ENCODE measurements at regions of chr19 and their contacts with region 1.

Region 1: GRCh38 chr19:36054119-36054732 is at the start of gene THAP8:
- DNase-seq: peak; percentile 99 to 100 (median 100)
- H3K4me3 ChIP-seq: peak within 1 kb of the TSS; percentile 79 to 93
- H3K4me3 Mint-ChIP-seq: peak within 1 kb of the TSS; percentile 96 to 100 (median 99)
- H3K27ac ChIP-seq: peak within 1 kb of the TSS; percentile 78
- H3K27ac Mint-ChIP-seq: peak within 1 kb of the TSS; percentile 98 to 99 (median 98)
- H3K4me1 ChIP-seq: peaks cover 11% of the 10 kb centered on the region
- H3K4me1 Mint-ChIP-seq: peaks cover 16 to 41% (median 21%) of the 10 kb centered on the region in 4 donors
- H3K27me3 ChIP-seq: no peaks in the 10 kb centered on the region
- H3K27me3 Mint-ChIP-seq: no peaks in the 10 kb centered on the region
- total RNA-seq, gene THAP8: 5.1 to 7.0 TPM

Region 2: DNA sequence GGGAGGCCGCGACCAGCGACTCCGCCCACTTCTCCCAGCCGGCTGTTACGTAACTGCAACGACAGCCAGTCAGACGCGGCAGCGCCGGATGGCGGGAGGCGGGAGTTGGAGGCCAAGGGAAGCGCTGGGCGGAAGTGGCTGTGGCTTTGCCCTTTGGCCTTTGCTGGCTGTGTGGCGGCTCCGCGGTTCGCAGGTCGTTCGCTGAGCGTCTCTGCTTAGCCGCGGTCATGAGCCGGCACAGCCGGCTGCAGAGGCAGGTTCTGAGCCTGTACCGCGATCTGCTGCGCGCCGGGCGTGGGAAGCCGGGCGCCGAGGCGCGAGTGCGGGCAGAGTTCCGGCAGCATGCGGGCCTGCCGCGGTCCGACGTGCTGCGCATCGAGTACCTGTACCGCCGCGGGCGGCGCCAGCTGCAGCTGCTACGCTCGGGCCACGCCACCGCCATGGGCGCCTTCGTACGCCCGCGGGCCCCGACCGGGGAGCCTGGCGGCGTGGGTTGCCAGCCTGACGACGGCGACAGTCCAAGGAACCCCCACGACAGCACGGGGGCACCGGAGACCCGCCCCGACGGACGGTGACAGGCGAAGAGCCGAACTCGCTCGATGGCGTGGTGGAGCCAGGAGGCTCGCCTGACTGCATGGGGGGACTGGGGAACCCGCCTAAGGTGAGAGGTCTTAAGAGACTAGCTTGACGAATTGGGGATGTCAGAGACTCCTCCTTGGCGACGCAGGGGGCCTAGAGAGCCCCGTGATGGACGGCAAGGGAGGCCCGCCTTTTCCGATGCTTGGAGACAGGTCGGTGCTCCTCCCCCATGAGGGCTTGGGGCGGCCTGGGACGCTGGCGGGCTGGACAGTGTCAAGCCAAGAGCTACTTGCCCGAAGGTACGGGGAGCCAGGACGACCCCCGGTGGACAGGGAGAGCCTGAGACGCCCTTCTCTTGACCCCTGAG is 58.9 kb before region 1 on chr19 and contains the start of gene SDHAF1:
- CTCF ChIA-PET with region 1: no interaction called
- POLR2A ChIA-PET with region 1: interaction called, 15 read pairs
- intact Hi-C with region 1: loop called (anchors 1 kb)
- DNase-seq: peak; percentile 87 to 92 (median 87)
- H3K4me3 ChIP-seq: peak within 1 kb of the TSS; percentile 69 to 82
- H3K4me3 Mint-ChIP-seq: peak within 1 kb of the TSS; percentile 91 to 96 (median 94)
- H3K27ac ChIP-seq: peak within 1 kb of the TSS; percentile 71
- H3K27ac Mint-ChIP-seq: peak within 1 kb of the TSS; percentile 92 to 97 (median 97)
- H3K4me1 ChIP-seq: peaks cover 26% of the 10 kb centered on the region
- H3K4me1 Mint-ChIP-seq: peaks cover 20 to 48% (median 37%) of the 10 kb centered on the region in 4 donors
- H3K27me3 ChIP-seq: no peaks in the 10 kb centered on the region
- H3K27me3 Mint-ChIP-seq: no peaks in the 10 kb centered on the region
- total RNA-seq, gene SDHAF1: 25.7 to 25.8 TPM

Region 3: GRCh38 chr19:36014029-36014924 is 39.9 kb before region 1 on chr19 and contains the start of gene ALKBH6:
- CTCF ChIA-PET with region 1: interaction called, 6 read pairs
- POLR2A ChIA-PET with region 1: interaction called, 17 read pairs
- intact Hi-C with region 1: loop called (anchors 1 kb)
- DNase-seq: peak; percentile 97 to 99 (median 98)
- H3K4me3 ChIP-seq: peak within 1 kb of the TSS; percentile 92
- H3K4me3 Mint-ChIP-seq: peak within 1 kb of the TSS; percentile 94 to 99 (median 94)
- H3K27ac ChIP-seq: peak within 1 kb of the TSS; percentile 74
- H3K27ac Mint-ChIP-seq: peak within 1 kb of the TSS; percentile 85 to 99 (median 98)
- H3K4me1 ChIP-seq: peaks cover 30% of the 10 kb centered on the region
- H3K4me1 Mint-ChIP-seq: peaks cover 25 to 50% (median 33%) of the 10 kb centered on the region in 4 donors
- H3K27me3 ChIP-seq: no peaks in the 10 kb centered on the region
- H3K27me3 Mint-ChIP-seq: no peaks in the 10 kb centered on the region
- total RNA-seq, gene ALKBH6: 50.9 to 51.0 TPM

Region 4: DNA sequence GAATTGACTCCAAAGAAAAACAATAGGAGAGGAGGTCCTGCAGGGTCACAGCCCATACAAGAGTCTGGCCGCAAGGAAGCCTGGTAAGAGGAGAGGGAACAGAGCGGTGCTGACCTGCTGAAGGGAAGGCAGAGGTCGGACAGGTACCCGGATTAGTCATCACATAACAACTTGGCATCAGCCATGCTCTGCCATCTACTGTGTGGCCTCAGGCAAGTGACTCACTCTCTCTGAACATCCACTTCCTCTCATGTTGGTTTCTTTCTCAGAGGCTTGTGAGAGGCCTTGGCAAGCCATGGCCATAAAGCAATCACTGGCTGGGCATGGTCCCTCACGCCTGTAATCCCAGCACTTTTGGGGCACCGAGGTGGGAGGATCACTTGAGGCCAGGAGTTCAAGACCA is 78.3 kb after region 1 on chr19:
- CTCF ChIA-PET with region 1: interaction called, 6 read pairs
- POLR2A ChIA-PET with region 1: interaction called, 5 read pairs
- intact Hi-C with region 1: loop called (anchors 1 kb)
- DNase-seq: peak in 2 of 5 donors; percentile 14 to 54
- H3K4me3 ChIP-seq: no peak overlapping the region
- H3K4me3 Mint-ChIP-seq: peak overlapping the region in 4 of 8 donors; percentile 40 to 59 (median 54)
- H3K27ac ChIP-seq: no peak overlapping the region
- H3K27ac Mint-ChIP-seq: peak overlapping the region; percentile 29 to 86 (median 78)
- H3K4me1 ChIP-seq: peaks cover 32% of the 10 kb centered on the region
- H3K4me1 Mint-ChIP-seq: peaks cover 15 to 50% (median 29%) of the 10 kb centered on the region in 4 donors
- H3K27me3 ChIP-seq: no peaks in the 10 kb centered on the region
- H3K27me3 Mint-ChIP-seq: no peaks in the 10 kb centered on the region

Region 5: GRCh38 chr19:36139473-36140303 is 85.5 kb after region 1 on chr19 and contains the start of gene CAPNS1:
- CTCF ChIA-PET with region 1: no interaction called
- POLR2A ChIA-PET with region 1: interaction called, 8 read pairs
- intact Hi-C with region 1: loop called (anchors 1 kb)
- DNase-seq: peak; percentile 87 to 90 (median 88)
- H3K4me3 ChIP-seq: peak within 1 kb of the TSS; percentile 74 to 84
- H3K4me3 Mint-ChIP-seq: peak within 1 kb of the TSS; percentile 92 to 97 (median 96)
- H3K27ac ChIP-seq: peak within 1 kb of the TSS; percentile 88
- H3K27ac Mint-ChIP-seq: peak within 1 kb of the TSS; percentile 70 to 97 (median 95)
- H3K4me1 ChIP-seq: peaks cover 15% of the 10 kb centered on the region
- H3K4me1 Mint-ChIP-seq: peaks cover 12 to 31% (median 23%) of the 10 kb centered on the region in 4 donors
- H3K27me3 ChIP-seq: no peaks in the 10 kb centered on the region
- H3K27me3 Mint-ChIP-seq: no peaks in the 10 kb centered on the region
- total RNA-seq, gene CAPNS1: 255 to 259 TPM

Measured in CD4-positive, alpha-beta memory T cell (primary cell).